K562 (cell line): ENCODE measurements at regions of chr15 and their contacts with region 1.

Region 1: GRCh38 chr15:73964736-73965093 is 27.4 kb downstream of the STOML1 start:
- DNase-seq: peak; percentile 79 to 84 (median 81)
- ATAC-seq: peak; percentile 99
- H3K4me3 ChIP-seq: no peak overlapping the region
- H3K27ac ChIP-seq: no peak overlapping the region
- H3K4me1 ChIP-seq: peaks cover 0 to 5% of the 10 kb centered on the region in 2 experiments; a peak in 2 of 5 replicates
- H3K27me3 ChIP-seq: peaks cover 6 to 19% of the 10 kb centered on the region in 2 experiments; a peak in 4 of 5 replicates
- CTCF ChIP-seq: peak; percentile 95 to 99 (median 96)
- EP300 ChIP-seq: no peak
- POLR2A ChIP-seq: no peak
- RAD21 ChIP-seq: peak; percentile 49 to 75

Region 2: GRCh38 chr15:73897441-73898261 is 67.1 kb before region 1 on chr15:
- CTCF ChIA-PET with region 1: interaction called, 5 read pairs
- POLR2A ChIA-PET with region 1: no interaction called
- in situ Hi-C with region 1: no loop called
- intact Hi-C with region 1: loop called (anchors 1 kb)
- DNase-seq: peak; percentile 73 to 94 (median 90)
- ATAC-seq: peak; percentile 99
- H3K4me3 ChIP-seq: no peak overlapping the region
- H3K27ac ChIP-seq: no peak overlapping the region
- H3K4me1 ChIP-seq: peaks cover 0 to 3% of the 10 kb centered on the region in 2 experiments; a peak in 1 of 5 replicates
- H3K27me3 ChIP-seq: peaks cover 7 to 65% of the 10 kb centered on the region in 2 experiments; a peak in 4 of 5 replicates
- CTCF ChIP-seq: peak; percentile 95 to 98 (median 97)
- EP300 ChIP-seq: no peak
- POLR2A ChIP-seq: no peak
- RAD21 ChIP-seq: peak in 1 of 2 experiments; percentile 61; a peak in 3 of 4 replicates

Region 3: GRCh38 chr15:73950831-73951561 is 13.7 kb before region 1 on chr15:
- CTCF ChIA-PET with region 1: interaction called, 17 read pairs
- POLR2A ChIA-PET with region 1: interaction called, 4 read pairs
- in situ Hi-C with region 1: no loop called
- intact Hi-C with region 1: loop called (anchors 1 kb)
- DNase-seq: peak; percentile 81 to 89 (median 84)
- ATAC-seq: peak; percentile 99
- H3K4me3 ChIP-seq: no peak overlapping the region
- H3K27ac ChIP-seq: no peak overlapping the region
- H3K4me1 ChIP-seq: peaks cover 0 to 23% of the 10 kb centered on the region in 2 experiments; a peak in 1 of 5 replicates
- H3K27me3 ChIP-seq: peaks cover 5 to 69% of the 10 kb centered on the region in 2 experiments; a peak in 4 of 5 replicates
- CTCF ChIP-seq: peak; percentile 85 to 90 (median 88)
- EP300 ChIP-seq: no peak
- POLR2A ChIP-seq: no peak
- RAD21 ChIP-seq: peak; percentile 75 to 86

Region 4: GRCh38 chr15:74158855-74159650 is 194.3 kb after region 1 on chr15:
- CTCF ChIA-PET with region 1: no interaction called
- POLR2A ChIA-PET with region 1: no interaction called
- in situ Hi-C with region 1: no loop called
- intact Hi-C with region 1: no loop called
- DNase-seq: no peak
- ATAC-seq: no peak
- H3K4me3 ChIP-seq: no peak overlapping the region
- H3K27ac ChIP-seq: no peak overlapping the region
- H3K4me1 ChIP-seq: no peaks in the 10 kb centered on the region
- H3K27me3 ChIP-seq: peaks cover 21 to 27% of the 10 kb centered on the region in 2 experiments
- CTCF ChIP-seq: no peak
- EP300 ChIP-seq: no peak
- POLR2A ChIP-seq: no peak
- RAD21 ChIP-seq: no peak